ENCODE measurements at regions of chr10 and their contacts with region 1.

Region 1: GRCh38 chr10:10685566-10685965 is 332.1 kb upstream of the CELF2 start:
- H3K4me3 Mint-ChIP-seq: no peak overlapping the region
- H3K27ac Mint-ChIP-seq: no peak overlapping the region
- H3K4me1 Mint-ChIP-seq: no peaks in the 10 kb centered on the region
- H3K27me3 Mint-ChIP-seq: peaks cover 2% of the 10 kb centered on the region

Region 2: GRCh38 chr10:9608602-9609001 is 1077.0 kb before region 1 on chr10:
- intact Hi-C with region 1: loop called (anchors 10 kb)
- H3K4me3 Mint-ChIP-seq: no peak overlapping the region
- H3K27ac Mint-ChIP-seq: no peak overlapping the region
- H3K4me1 Mint-ChIP-seq: peaks cover 5% of the 10 kb centered on the region
- H3K27me3 Mint-ChIP-seq: no peaks in the 10 kb centered on the region